Endothelial cell of umbilical vein (primary cell): ENCODE measurements at regions of chr4 and their contacts with region 1.

Region 1: DNA sequence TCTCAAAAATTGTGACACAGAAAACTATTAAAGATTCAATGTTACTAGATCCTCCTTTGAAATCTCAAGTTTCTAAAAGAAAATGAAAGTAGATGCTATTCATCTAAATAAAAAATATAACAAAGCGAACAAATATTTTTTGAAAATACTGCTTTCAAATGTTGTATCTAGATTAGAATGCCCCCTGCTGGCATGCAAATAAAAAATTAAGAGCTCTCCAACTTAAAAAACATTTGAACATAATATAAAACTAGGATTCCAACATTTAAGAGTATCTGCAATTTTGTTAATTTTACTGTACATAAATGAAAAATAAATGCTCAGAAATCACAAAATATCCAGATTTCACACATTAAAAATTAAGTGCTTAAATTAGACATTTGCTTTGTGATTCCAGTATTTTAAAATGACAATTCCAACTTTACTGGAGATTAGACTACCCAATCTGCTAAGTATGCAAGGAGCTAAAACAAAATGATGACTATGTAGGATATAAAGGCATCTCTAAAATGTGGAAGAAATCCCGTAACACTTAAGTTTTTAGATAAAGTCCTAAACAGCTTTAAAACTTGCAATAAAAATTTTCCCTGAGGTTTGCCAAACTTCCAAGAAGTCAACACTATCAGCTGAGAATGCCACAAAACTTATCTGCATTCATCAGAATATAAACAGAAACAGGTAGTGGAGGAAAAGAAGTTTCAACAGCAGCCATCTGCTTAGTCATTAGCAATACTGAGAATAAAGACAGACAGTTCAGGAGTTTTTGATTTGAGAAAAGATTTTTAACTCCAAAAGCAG is 32.7 kb downstream of the DHX15 start:
- DNase-seq: peak; percentile 61
- H3K4me3 ChIP-seq: no peak overlapping the region
- H3K27ac ChIP-seq: peak overlapping the region; percentile 5
- H3K4me1 ChIP-seq: peaks cover 12% of the 10 kb centered on the region
- H3K27me3 ChIP-seq: no peaks in the 10 kb centered on the region
- CTCF ChIP-seq: peak; percentile 19 to 23
- POLR2A ChIP-seq: no peak

Region 2: GRCh38 chr4:24164054-24164693 is 387.5 kb before region 1 on chr4:
- CTCF ChIA-PET with region 1: no interaction called
- POLR2A ChIA-PET with region 1: no interaction called
- dilution Hi-C with region 1: no loop called
- intact Hi-C with region 1: no loop called
- DNase-seq: no peak
- H3K4me3 ChIP-seq: no peak overlapping the region
- H3K27ac ChIP-seq: no peak overlapping the region
- H3K4me1 ChIP-seq: no peaks in the 10 kb centered on the region
- H3K27me3 ChIP-seq: no peaks in the 10 kb centered on the region
- CTCF ChIP-seq: no peak
- POLR2A ChIP-seq: no peak

Region 3: DNA sequence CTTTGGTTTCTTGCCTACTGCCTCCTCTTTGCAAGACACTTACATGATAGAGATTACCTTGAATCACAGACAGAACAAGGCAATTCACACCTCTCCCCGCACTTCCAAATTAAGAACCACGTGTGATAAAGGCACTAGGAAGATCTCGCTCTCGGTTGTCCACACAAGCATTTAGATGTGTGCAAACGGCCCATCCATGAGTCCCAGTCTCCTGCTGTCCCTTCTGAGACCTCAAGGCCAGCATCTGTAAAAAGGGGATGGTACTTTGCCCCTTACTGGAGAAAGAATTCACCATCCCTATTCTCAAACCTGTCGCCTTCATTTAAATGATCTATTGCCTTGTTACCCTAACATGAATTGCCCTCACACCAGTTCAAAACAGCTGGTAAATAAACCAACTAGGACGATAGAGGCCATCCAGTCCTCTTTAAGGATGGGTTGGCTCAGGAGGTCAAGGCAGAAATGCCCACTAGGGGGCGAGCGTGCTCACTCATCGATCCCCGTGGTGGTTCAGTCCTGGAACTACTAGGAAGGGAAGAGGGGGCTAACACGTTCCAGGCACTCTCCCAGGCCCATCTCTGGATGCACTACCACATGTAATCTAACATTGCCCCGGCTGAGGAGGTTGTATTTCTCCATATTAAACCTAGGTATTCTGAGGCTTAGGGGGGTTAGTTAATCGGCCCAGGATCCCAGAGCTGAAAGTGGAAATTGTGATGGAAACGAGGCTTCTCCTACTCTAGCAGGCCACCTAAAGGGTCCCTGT is 63.1 kb before region 1 on chr4:
- CTCF ChIA-PET with region 1: interaction called, 5 read pairs
- POLR2A ChIA-PET with region 1: no interaction called
- dilution Hi-C with region 1: no loop called
- intact Hi-C with region 1: loop called (anchors 5 kb)
- DNase-seq: peak; percentile 67
- H3K4me3 ChIP-seq: no peak overlapping the region
- H3K27ac ChIP-seq: no peak overlapping the region
- H3K4me1 ChIP-seq: no peaks in the 10 kb centered on the region
- H3K27me3 ChIP-seq: peaks cover 6 to 9% of the 10 kb centered on the region in 2 experiments
- CTCF ChIP-seq: peak; percentile 88 to 90
- POLR2A ChIP-seq: no peak

Region 4: DNA sequence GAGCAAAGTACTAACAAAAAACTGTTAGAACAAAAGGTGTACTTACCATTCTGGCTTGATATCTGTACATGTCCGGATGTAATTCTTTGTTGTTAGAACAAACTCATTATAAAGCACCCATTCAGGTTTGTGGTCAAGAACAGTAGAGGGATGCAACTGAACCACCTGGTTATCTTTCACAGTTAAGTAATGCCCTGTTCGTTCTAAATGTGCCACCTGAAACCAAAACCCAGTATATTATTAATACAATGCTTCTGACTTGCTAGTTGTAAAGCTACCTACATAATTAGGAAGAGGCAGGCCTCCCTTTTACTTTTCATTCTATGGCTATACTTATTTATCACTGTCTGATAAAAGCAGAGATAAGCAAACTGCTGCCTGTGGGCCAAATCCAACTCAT is 22.1 kb before region 1 on chr4:
- CTCF ChIA-PET with region 1: interaction called, 15 read pairs
- POLR2A ChIA-PET with region 1: no interaction called
- dilution Hi-C with region 1: no loop called
- intact Hi-C with region 1: no loop called
- DNase-seq: no peak
- H3K4me3 ChIP-seq: no peak overlapping the region
- H3K27ac ChIP-seq: no peak overlapping the region
- H3K4me1 ChIP-seq: no peaks in the 10 kb centered on the region
- H3K27me3 ChIP-seq: no peaks in the 10 kb centered on the region
- CTCF ChIP-seq: no peak
- POLR2A ChIP-seq: no peak

Region 5: DNA sequence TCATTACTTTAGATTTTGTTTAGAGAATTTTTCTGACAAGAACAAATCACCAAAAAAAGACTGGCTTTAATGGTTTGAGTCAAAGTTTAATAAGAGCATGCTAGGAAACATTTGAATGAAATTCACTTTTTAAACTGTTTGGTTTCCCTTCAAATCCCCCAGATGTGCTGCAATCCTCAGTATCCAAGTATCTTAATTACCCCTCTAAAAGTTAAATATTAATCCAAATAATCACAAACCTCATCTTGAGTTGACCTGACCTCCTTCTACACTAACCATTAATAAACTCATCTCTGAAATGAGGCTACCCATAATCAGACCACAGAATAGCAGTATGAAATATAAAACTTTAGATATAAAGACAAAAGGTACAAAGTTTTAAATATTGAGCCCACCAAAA is 22.5 kb after region 1 on chr4:
- CTCF ChIA-PET with region 1: interaction called, 17 read pairs
- POLR2A ChIA-PET with region 1: no interaction called
- dilution Hi-C with region 1: no loop called
- intact Hi-C with region 1: no loop called
- DNase-seq: no peak
- H3K4me3 ChIP-seq: no peak overlapping the region
- H3K27ac ChIP-seq: no peak overlapping the region
- H3K4me1 ChIP-seq: no peaks in the 10 kb centered on the region
- H3K27me3 ChIP-seq: no peaks in the 10 kb centered on the region
- CTCF ChIP-seq: no peak
- POLR2A ChIP-seq: no peak

Region 6: GRCh38 chr4:24912252-24913118 is 360.8 kb after region 1 on chr4 and contains the start of gene CCDC149:
- CTCF ChIA-PET with region 1: interaction called, 4 read pairs
- POLR2A ChIA-PET with region 1: no interaction called
- dilution Hi-C with region 1: no loop called
- intact Hi-C with region 1: loop called (anchors 10 kb)
- DNase-seq: peak; percentile 43
- H3K4me3 ChIP-seq: peak within 1 kb of the TSS; percentile 44 to 73 (median 50)
- H3K27ac ChIP-seq: peak within 1 kb of the TSS; percentile 13
- H3K4me1 ChIP-seq: peaks cover 5% of the 10 kb centered on the region
- H3K27me3 ChIP-seq: peaks cover 0 to 2% of the 10 kb centered on the region in 2 experiments
- CTCF ChIP-seq: no peak
- POLR2A ChIP-seq: no peak
- total RNA-seq, gene CCDC149: 11.3 and 12.5 TPM in 2 replicates